Naive thymus-derived CD4-positive, alpha-beta T cell (primary cell): ENCODE measurements at regions of chr15 and their contacts with region 1.

Region 1: GRCh38 chr15:78872972-78873792 is 492 bp downstream of the MORF4L1 start:
- DNase-seq: peak; percentile 75 to 91 (median 90)
- ATAC-seq: peak; percentile 79
- H3K4me3 ChIP-seq: peak overlapping the region; percentile 100
- H3K4me3 Mint-ChIP-seq: peak overlapping the region; percentile 94 to 100 (median 99)
- H3K27ac ChIP-seq: peak overlapping the region; percentile 100
- H3K27ac Mint-ChIP-seq: peak overlapping the region; percentile 100
- H3K4me1 ChIP-seq: peaks cover 37 to 38% of the 10 kb centered on the region in 2 donors
- H3K4me1 Mint-ChIP-seq: peaks cover 29 to 54% (median 45%) of the 10 kb centered on the region in 7 donors
- H3K27me3 ChIP-seq: no peaks in the 10 kb centered on the region
- H3K27me3 Mint-ChIP-seq: no peaks in the 10 kb centered on the region

Region 2: GRCh38 chr15:78299101-78299930 is 573.9 kb before region 1 on chr15 and contains the start of gene SKIC8:
- CTCF ChIA-PET with region 1: no interaction called
- POLR2A ChIA-PET with region 1: interaction called, 3 read pairs
- intact Hi-C with region 1: loop called in 1 of 2 experiments (anchors 2 kb)
- DNase-seq: peak; percentile 84 to 92 (median 91)
- ATAC-seq: peak; percentile 99
- H3K4me3 ChIP-seq: peak within 1 kb of the TSS; percentile 88
- H3K4me3 Mint-ChIP-seq: peak within 1 kb of the TSS; percentile 94 to 99 (median 97)
- H3K27ac ChIP-seq: peak within 1 kb of the TSS; percentile 80
- H3K27ac Mint-ChIP-seq: peak within 1 kb of the TSS; percentile 89 to 97 (median 94)
- H3K4me1 ChIP-seq: peaks cover 8 to 15% of the 10 kb centered on the region in 2 donors
- H3K4me1 Mint-ChIP-seq: peaks cover 12 to 41% (median 31%) of the 10 kb centered on the region in 7 donors
- H3K27me3 ChIP-seq: no peaks in the 10 kb centered on the region
- H3K27me3 Mint-ChIP-seq: no peaks in the 10 kb centered on the region
- total RNA-seq, gene SKIC8: 26.7 to 48.7 (median 43.6) TPM

Region 3: GRCh38 chr15:78750566-78750965 is 122.6 kb before region 1 on chr15:
- CTCF ChIA-PET with region 1: no interaction called
- POLR2A ChIA-PET with region 1: interaction called, 5 read pairs
- intact Hi-C with region 1: loop called in 1 of 2 experiments (anchors 1 kb)
- DNase-seq: no peak
- ATAC-seq: no peak
- H3K4me3 ChIP-seq: no peak overlapping the region
- H3K4me3 Mint-ChIP-seq: peak overlapping the region; percentile 29 to 76 (median 58)
- H3K27ac ChIP-seq: no peak overlapping the region
- H3K27ac Mint-ChIP-seq: peak overlapping the region in 2 of 9 donors; percentile 22 to 43
- H3K4me1 ChIP-seq: peaks cover 0 to 6% of the 10 kb centered on the region in 2 donors
- H3K4me1 Mint-ChIP-seq: peaks cover 4 to 6% (median 5%) of the 10 kb centered on the region in 7 donors
- H3K27me3 ChIP-seq: no peaks in the 10 kb centered on the region
- H3K27me3 Mint-ChIP-seq: no peaks in the 10 kb centered on the region

Region 4: DNA sequence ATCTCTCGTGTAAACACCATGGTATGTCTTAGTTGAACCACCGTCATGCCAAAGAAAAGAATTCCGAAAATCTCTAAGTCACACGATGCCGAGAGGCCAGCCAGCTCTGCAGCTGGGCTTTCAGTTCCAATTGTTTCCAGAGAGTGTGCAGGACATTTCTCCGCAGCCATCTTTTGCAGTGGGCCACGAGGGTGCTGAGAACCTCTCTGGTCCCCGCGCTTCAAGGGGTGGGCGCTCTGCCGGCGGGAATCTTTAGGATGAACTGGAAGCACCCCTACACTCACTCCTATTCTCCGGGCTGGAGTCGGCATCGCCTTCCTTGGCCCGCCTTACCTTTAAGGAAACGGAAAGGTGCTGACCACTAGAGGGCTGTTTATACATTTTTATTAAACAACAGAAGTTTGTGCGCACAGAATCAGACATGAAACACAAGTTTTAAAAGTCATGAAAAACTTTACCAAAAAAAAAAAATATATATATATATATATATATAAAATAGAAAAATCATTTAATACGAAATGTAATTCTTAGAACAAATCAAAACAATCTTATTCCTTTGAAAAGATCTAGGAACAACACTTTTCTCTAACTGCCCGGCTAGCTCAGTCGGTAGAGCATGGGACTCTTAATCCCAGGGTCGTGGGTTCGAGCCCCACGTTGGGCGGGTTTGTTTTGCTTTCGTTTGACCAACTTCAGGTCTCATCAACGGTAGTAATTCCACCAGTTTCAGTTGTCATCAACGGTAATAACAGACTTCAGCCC is 13.0 kb before region 1 on chr15:
- CTCF ChIA-PET with region 1: interaction called, 4 read pairs
- POLR2A ChIA-PET with region 1: interaction called, 9 read pairs
- intact Hi-C with region 1: loop called (anchors 1 kb)
- DNase-seq: peak; percentile 41 to 80 (median 61)
- ATAC-seq: peak; percentile 84
- H3K4me3 ChIP-seq: peak overlapping the region; percentile 46
- H3K4me3 Mint-ChIP-seq: peak overlapping the region; percentile 69 to 90 (median 84)
- H3K27ac ChIP-seq: peak overlapping the region; percentile 36
- H3K27ac Mint-ChIP-seq: peak overlapping the region; percentile 13 to 95 (median 83)
- H3K4me1 ChIP-seq: no peaks in the 10 kb centered on the region
- H3K4me1 Mint-ChIP-seq: peaks cover 0 to 10% (median 6%) of the 10 kb centered on the region in 7 donors
- H3K27me3 ChIP-seq: no peaks in the 10 kb centered on the region
- H3K27me3 Mint-ChIP-seq: peaks cover 0 to 15% (median 0%) of the 10 kb centered on the region in 5 donors

Region 5: GRCh38 chr15:78944669-78945407 is 71.7 kb after region 1 on chr15 and contains the start of gene CTSH:
- CTCF ChIA-PET with region 1: no interaction called
- POLR2A ChIA-PET with region 1: no interaction called
- intact Hi-C with region 1: loop called in 1 of 2 experiments (anchors 2 kb)
- DNase-seq: peak; percentile 30 to 80 (median 60)
- ATAC-seq: peak; percentile 93
- H3K4me3 ChIP-seq: peak within 1 kb of the TSS; percentile 60
- H3K4me3 Mint-ChIP-seq: peak within 1 kb of the TSS; percentile 59 to 89 (median 74)
- H3K27ac ChIP-seq: no peak within 1 kb of the TSS
- H3K27ac Mint-ChIP-seq: peak within 1 kb of the TSS in 1 of 9 donors; percentile 52
- H3K4me1 ChIP-seq: peaks cover 0 to 6% of the 10 kb centered on the region in 2 donors
- H3K4me1 Mint-ChIP-seq: peaks cover 0 to 9% (median 7%) of the 10 kb centered on the region in 7 donors
- H3K27me3 ChIP-seq: no peaks in the 10 kb centered on the region
- H3K27me3 Mint-ChIP-seq: peaks cover 0 to 37% (median 5%) of the 10 kb centered on the region in 5 donors
- total RNA-seq, gene CTSH: 8.4 to 98.4 (median 10.4) TPM

Region 6: DNA sequence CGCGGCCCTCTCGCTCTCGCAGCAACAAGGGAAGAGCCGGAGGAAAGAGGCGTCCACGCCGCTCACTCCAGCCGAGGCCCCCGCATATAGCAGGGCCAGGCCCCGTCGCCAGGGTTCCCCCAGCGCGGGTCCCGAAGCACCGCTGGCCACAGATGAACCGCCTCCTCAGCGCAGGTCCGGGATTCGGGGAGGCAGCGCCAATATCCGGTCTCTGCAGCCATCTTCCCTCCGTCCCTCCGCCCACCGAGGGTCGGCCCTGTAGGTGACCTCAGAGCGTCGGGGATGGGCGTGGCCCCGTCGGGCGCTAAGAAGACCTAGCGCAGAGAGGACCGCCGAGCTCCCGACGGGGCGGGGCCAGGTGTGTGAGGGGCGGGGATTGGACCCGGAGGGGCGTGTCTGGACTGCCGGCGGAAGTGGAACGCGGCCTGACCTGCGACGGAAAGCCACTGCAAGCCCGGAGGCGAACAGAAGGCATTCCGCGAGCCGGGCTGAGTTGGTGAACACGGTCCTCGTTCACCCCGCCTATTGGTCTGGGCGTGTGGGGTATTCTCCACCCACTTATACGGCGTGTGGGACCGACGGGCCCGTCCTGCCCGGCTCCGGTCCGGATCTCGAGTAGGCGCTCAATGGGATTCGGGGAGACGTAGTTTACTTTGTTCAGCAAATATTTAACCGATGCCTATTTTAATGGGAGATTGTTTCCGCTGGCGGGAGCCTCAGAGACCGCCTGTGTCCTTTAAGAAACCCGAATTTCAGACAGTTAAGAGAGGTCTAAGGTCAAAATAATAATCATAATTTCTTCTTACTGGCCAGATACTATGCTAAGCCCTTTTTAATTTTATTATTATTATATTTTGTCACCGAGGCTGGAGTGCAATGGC is 1050.6 kb after region 1 on chr15:
- CTCF ChIA-PET with region 1: no interaction called
- POLR2A ChIA-PET with region 1: no interaction called
- intact Hi-C with region 1: loop called in 1 of 2 experiments (anchors 5 kb)
- DNase-seq: peak; percentile 95 to 100 (median 99)
- ATAC-seq: peak; percentile 98
- H3K4me3 ChIP-seq: peak overlapping the region; percentile 98
- H3K4me3 Mint-ChIP-seq: peak overlapping the region; percentile 90 to 98 (median 94)
- H3K27ac ChIP-seq: peak overlapping the region; percentile 96
- H3K27ac Mint-ChIP-seq: peak overlapping the region; percentile 95 to 98 (median 97)
- H3K4me1 ChIP-seq: peaks cover 11 to 14% of the 10 kb centered on the region in 2 donors
- H3K4me1 Mint-ChIP-seq: peaks cover 9 to 30% (median 24%) of the 10 kb centered on the region in 7 donors
- H3K27me3 ChIP-seq: no peaks in the 10 kb centered on the region
- H3K27me3 Mint-ChIP-seq: no peaks in the 10 kb centered on the region